ENCODE measurements at regions of chr11 and their contacts with region 1.

Region 1: GRCh38 chr11:65850831-65851811 is 6.9 kb downstream of the CFL1 start:
- DNase-seq: peak; percentile 29
- H3K4me3 Mint-ChIP-seq: no peak overlapping the region
- H3K27ac Mint-ChIP-seq: no peak overlapping the region
- H3K4me1 Mint-ChIP-seq: peaks cover 29% of the 10 kb centered on the region
- H3K27me3 Mint-ChIP-seq: no peaks in the 10 kb centered on the region

Region 2: GRCh38 chr11:65743928-65744698 is 107.0 kb before region 1 on chr11:
- CTCF ChIA-PET with region 1: no interaction called
- POLR2A ChIA-PET with region 1: no interaction called
- DNase-seq: no peak
- H3K4me3 Mint-ChIP-seq: no peak overlapping the region
- H3K27ac Mint-ChIP-seq: no peak overlapping the region
- H3K4me1 Mint-ChIP-seq: peaks cover 2% of the 10 kb centered on the region
- H3K27me3 Mint-ChIP-seq: peaks cover 31% of the 10 kb centered on the region

Region 3: GRCh38 chr11:65833297-65834030 is 17.7 kb before region 1 on chr11 and contains the start of gene SNX32:
- CTCF ChIA-PET with region 1: interaction called, 5 read pairs
- POLR2A ChIA-PET with region 1: interaction called, 22 read pairs
- DNase-seq: peak; percentile 96
- H3K4me3 Mint-ChIP-seq: no peak within 1 kb of the TSS
- H3K27ac Mint-ChIP-seq: peak within 1 kb of the TSS; percentile 29
- H3K4me1 Mint-ChIP-seq: peaks cover 19% of the 10 kb centered on the region
- H3K27me3 Mint-ChIP-seq: peaks cover 26% of the 10 kb centered on the region
- total RNA-seq, gene SNX32: 0.83 to 1.6 TPM

Region 4: DNA sequence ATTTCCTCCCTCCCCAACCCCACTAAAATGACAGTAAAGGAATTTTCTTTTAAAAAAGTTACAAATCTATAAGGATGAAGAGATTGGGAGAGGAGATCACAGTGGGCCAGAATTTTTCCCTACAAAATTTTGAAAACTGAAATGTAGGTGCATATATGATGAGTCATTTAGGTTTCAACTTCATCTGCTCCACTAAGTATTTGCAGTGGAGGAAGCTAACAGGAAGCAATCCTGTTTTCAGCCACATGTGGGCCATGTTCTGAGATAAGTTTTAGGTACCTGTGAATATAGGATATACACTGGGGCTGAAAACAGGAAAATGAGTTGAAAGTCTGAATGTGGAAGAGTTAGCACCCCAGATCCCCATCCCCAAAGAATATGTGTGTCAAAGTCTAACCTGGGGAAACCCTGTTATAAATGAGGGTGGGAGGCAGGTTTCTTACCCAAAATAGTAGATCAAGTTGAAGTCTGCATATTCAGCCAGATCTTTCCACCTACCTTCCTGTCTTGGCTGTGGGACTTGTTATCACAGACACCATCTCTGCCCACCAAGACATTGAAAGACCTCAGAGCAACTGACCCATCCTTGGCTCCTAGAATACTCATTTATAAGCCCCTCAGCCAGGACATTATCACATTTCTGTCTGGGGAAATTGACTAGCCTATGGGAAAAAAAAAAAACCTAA is 306.2 kb after region 1 on chr11:
- CTCF ChIA-PET with region 1: no interaction called
- POLR2A ChIA-PET with region 1: no interaction called
- DNase-seq: no peak
- H3K4me3 Mint-ChIP-seq: no peak overlapping the region
- H3K27ac Mint-ChIP-seq: no peak overlapping the region
- H3K4me1 Mint-ChIP-seq: peaks cover 21% of the 10 kb centered on the region
- H3K27me3 Mint-ChIP-seq: no peaks in the 10 kb centered on the region